Activated CD4-positive, alpha-beta T cell treated with anti-CD3 and anti-CD28 coated beads for 36 hours (primary cell): ENCODE measurements at regions of chr3 and their contacts with region 1.

Region 1: DNA sequence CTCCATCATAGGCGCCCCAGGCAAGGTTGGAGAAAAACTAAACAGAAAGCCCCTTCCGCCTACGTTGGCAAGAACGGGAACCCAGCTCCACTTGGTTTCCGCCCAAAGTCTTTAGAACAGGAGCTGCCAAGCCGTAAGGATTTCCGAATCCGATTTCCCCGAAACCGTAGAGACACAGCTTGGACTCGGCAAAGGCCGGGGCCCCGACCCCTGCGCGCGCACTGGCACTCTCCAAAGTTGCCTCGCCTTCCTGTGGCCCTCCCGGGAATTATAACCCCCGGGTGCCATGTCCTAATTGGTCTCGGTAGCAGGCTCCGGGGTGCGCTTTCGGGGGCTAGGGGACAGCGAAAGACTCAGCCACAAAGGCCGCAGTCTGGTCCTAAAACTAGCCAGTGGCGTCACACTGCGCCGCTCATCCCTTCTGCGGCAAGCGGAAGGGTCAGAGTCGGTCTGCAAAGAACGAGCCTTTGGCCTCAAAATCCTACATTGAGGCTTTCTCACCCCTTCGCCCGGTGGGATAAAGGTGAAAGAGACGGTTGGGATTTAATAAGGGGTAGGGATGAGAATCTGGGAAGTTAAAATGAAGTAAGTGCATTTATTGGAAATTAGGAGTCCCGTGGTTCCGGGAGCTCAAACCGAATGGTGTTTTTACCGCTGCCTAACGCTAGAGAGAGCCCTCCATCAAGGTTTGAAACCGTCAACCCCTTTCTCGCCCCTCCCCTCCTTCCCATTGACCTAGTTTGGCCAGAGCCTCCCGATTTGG is 6.8 kb downstream of the BCL6 start:
- DNase-seq: peak; percentile 82
- ATAC-seq: peak; percentile 25
- H3K4me3 Mint-ChIP-seq: peak overlapping the region; percentile 91
- H3K27ac Mint-ChIP-seq: peak overlapping the region; percentile 99
- H3K4me1 Mint-ChIP-seq: peaks cover 47% of the 10 kb centered on the region
- H3K27me3 Mint-ChIP-seq: no peaks in the 10 kb centered on the region

Region 2: GRCh38 chr3:187648177-187648576 is 90.3 kb before region 1 on chr3:
- CTCF ChIA-PET with region 1: no interaction called
- POLR2A ChIA-PET with region 1: no interaction called
- intact Hi-C with region 1: no loop called
- DNase-seq: no peak
- ATAC-seq: no peak
- H3K4me3 Mint-ChIP-seq: no peak overlapping the region
- H3K27ac Mint-ChIP-seq: no peak overlapping the region
- H3K4me1 Mint-ChIP-seq: no peaks in the 10 kb centered on the region
- H3K27me3 Mint-ChIP-seq: peaks cover 38% of the 10 kb centered on the region

Region 3: DNA sequence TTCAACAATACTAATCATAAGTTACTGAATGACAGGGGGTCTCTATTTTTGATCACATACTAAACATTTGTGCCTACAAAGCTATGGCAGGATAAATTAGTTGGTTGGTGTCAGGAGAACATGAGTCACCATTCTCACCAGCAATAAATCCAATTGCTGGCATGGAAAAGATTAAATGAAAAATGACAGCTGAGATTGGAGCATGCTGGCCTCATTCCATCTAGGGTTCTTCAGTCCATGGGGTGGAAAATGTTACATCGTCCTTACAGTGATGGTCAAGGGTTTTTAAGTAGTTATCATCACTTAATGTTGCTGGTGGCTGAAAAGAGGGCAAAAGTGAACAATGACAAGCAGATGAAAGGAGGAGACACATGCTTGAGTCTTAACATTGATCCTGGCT is 186.8 kb after region 1 on chr3:
- CTCF ChIA-PET with region 1: interaction called, 19 read pairs
- POLR2A ChIA-PET with region 1: interaction called, 5 read pairs
- intact Hi-C with region 1: no loop called
- DNase-seq: no peak
- ATAC-seq: no peak
- H3K4me3 Mint-ChIP-seq: no peak overlapping the region
- H3K27ac Mint-ChIP-seq: no peak overlapping the region
- H3K4me1 Mint-ChIP-seq: peaks cover 76% of the 10 kb centered on the region
- H3K27me3 Mint-ChIP-seq: no peaks in the 10 kb centered on the region

Region 4: GRCh38 chr3:188170461-188171459 is 432.2 kb after region 1 on chr3:
- CTCF ChIA-PET with region 1: interaction called, 16 read pairs
- POLR2A ChIA-PET with region 1: interaction called, 3 read pairs
- intact Hi-C with region 1: loop called (anchors 1 kb)
- DNase-seq: peak; percentile 82
- ATAC-seq: peak; percentile 91
- H3K4me3 Mint-ChIP-seq: peak overlapping the region; percentile 20
- H3K27ac Mint-ChIP-seq: peak overlapping the region; percentile 88
- H3K4me1 Mint-ChIP-seq: peaks cover 59% of the 10 kb centered on the region
- H3K27me3 Mint-ChIP-seq: no peaks in the 10 kb centered on the region

Region 5: GRCh38 chr3:188320757-188321156 is 582.2 kb after region 1 on chr3:
- CTCF ChIA-PET with region 1: interaction called, 29 read pairs
- POLR2A ChIA-PET with region 1: interaction called, 23 read pairs
- intact Hi-C with region 1: loop called (anchors 1 to 5 kb)
- DNase-seq: no peak
- ATAC-seq: no peak
- H3K4me3 Mint-ChIP-seq: no peak overlapping the region
- H3K27ac Mint-ChIP-seq: no peak overlapping the region
- H3K4me1 Mint-ChIP-seq: peaks cover 63% of the 10 kb centered on the region
- H3K27me3 Mint-ChIP-seq: peaks cover 3% of the 10 kb centered on the region

Region 6: DNA sequence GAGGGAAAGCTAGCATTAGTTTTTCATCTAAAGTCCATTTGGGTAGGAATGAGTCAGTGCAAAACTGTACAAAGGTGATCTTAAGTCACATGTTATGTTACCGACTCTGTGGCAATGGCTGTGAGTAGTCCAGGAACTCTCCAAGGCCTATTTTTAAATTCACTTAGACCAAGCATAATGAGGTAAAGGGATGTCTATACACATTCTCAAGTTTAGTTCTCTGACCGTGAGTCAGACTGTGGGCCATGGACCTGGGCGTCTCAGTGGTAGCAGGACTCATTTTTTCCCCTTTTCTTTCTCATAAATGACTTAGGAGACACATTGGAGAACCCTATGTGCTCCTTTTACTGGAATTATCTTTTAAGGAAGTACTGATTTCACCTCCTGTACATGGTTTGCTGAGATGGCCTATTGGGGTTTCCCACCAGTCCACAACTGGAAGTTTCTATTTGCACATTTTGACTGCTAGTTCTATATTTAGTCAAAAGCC is 944.6 kb after region 1 on chr3:
- CTCF ChIA-PET with region 1: no interaction called
- POLR2A ChIA-PET with region 1: no interaction called
- intact Hi-C with region 1: loop called (anchors 5 to 10 kb)
- DNase-seq: peak; percentile 69
- ATAC-seq: peak; percentile 97
- H3K4me3 Mint-ChIP-seq: no peak overlapping the region
- H3K27ac Mint-ChIP-seq: no peak overlapping the region
- H3K4me1 Mint-ChIP-seq: peaks cover 41% of the 10 kb centered on the region
- H3K27me3 Mint-ChIP-seq: no peaks in the 10 kb centered on the region

Region 7: GRCh38 chr3:188788621-188789081 is 1050.1 kb after region 1 on chr3:
- CTCF ChIA-PET with region 1: interaction called, 8 read pairs
- POLR2A ChIA-PET with region 1: interaction called, 5 read pairs
- intact Hi-C with region 1: loop called (anchors 1 kb)
- DNase-seq: peak; percentile 89
- ATAC-seq: peak; percentile 97
- H3K4me3 Mint-ChIP-seq: no peak overlapping the region
- H3K27ac Mint-ChIP-seq: no peak overlapping the region
- H3K4me1 Mint-ChIP-seq: peaks cover 2% of the 10 kb centered on the region
- H3K27me3 Mint-ChIP-seq: no peaks in the 10 kb centered on the region

Region 8: DNA sequence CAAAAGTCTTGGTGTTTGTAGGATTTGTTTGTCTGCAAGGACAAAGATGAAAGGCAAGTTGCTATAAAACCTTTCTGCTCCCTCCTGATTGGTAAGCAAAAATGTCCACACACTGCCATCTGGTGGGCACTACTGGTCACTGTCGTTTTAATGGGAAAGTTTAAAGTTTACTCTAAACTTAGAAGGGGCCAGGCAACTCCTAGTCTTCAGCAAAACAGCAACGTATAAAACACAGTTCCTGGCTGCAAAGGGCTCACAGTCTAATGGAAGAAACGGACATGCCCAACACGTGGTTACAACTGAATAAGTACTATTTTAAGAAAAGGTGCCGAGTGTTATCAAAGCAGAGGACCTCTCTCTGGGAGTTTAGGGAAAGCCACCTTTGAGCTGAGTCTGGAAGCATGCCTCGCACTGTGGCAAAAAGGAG is 1409.6 kb after region 1 on chr3:
- CTCF ChIA-PET with region 1: interaction called, 10 read pairs
- POLR2A ChIA-PET with region 1: no interaction called
- intact Hi-C with region 1: loop called (anchors 1 kb)
- DNase-seq: peak; percentile 81
- ATAC-seq: peak; percentile 66
- H3K4me3 Mint-ChIP-seq: no peak overlapping the region
- H3K27ac Mint-ChIP-seq: no peak overlapping the region
- H3K4me1 Mint-ChIP-seq: peaks cover 17% of the 10 kb centered on the region
- H3K27me3 Mint-ChIP-seq: peaks cover 3% of the 10 kb centered on the region

Region 9: GRCh38 chr3:189488241-189488767 is 1749.8 kb after region 1 on chr3:
- CTCF ChIA-PET with region 1: no interaction called
- POLR2A ChIA-PET with region 1: no interaction called
- intact Hi-C with region 1: no loop called
- DNase-seq: no peak
- ATAC-seq: no peak
- H3K4me3 Mint-ChIP-seq: no peak overlapping the region
- H3K27ac Mint-ChIP-seq: no peak overlapping the region
- H3K4me1 Mint-ChIP-seq: no peaks in the 10 kb centered on the region
- H3K27me3 Mint-ChIP-seq: no peaks in the 10 kb centered on the region